Vagina (tissue), 2 donors: ENCODE measurements at regions of chr10 and their contacts with region 1.

Region 1: DNA sequence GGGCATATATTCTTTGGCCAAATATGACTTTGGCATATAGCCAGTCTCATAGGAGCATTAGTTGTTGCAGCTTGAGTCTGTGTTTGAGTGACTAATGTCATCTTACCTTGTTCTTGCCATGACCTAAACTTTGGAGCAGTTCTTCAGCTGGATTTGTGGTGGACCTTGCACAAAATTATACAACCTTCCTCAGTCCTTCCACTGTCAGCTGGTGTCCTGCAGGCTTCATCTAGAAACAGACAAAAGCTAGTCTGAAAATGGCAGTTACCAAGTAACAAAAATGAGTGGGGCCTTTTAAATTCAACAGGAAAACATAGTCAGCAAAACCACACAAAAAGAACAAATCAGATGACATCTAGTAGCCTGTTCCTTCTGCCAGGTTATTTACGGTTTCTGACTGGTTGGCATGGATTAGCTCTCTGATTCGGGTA is 59.5 kb upstream of the HECTD2 start:
- DNase-seq: no peak
- H3K4me3 ChIP-seq: no peak overlapping the region
- H3K27ac ChIP-seq: peak overlapping the region; percentile 43
- H3K4me1 ChIP-seq: peaks cover 16% of the 10 kb centered on the region
- H3K27me3 ChIP-seq: no peaks in the 10 kb centered on the region
- CTCF ChIP-seq: no peak
- POLR2A ChIP-seq: no peak

Region 2: DNA sequence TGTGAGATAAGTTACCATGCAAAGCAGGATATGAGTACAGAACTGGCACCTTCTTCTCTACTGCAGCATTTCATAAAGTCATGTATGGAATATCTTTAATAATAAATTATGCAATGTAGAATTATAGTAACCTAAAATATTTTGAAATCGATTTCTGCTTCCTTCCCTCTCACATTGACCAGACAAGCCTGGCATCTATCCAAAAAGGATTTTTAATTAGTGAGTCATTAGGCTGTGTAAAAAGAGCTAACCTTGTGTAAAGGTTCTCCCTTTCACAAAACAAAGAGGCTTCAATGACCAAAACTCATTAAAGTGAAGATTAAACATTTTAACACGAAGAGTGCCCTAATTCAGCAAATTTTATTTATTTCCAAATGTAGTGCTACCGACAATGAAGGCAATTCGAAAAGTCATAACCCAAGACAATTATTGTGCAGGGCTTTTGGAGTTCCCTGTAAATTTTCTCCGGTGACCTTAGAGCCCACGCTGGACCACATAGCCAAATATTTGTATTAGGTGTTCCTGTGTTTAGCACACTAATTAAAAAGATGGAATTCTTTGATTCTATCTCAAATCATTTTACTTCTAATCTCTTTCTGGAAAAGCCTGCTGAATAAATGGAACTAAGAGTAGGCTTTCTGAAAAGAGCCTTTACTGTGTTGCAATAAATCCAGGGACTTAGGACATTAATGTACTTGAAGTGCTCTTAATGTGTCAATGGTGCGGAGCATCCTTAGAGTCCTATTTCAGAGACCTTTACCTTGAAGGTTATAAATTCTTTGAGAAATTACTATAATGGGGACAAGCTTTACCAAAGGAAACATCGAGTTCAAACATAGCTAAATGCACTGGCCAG is 1449.2 kb after region 1 on chr10:
- intact Hi-C with region 1: loop called (anchors 5 kb)
- DNase-seq: no peak
- H3K4me3 ChIP-seq: no peak overlapping the region
- H3K27ac ChIP-seq: no peak overlapping the region
- H3K4me1 ChIP-seq: no peaks in the 10 kb centered on the region
- H3K27me3 ChIP-seq: no peaks in the 10 kb centered on the region
- CTCF ChIP-seq: no peak
- POLR2A ChIP-seq: no peak

Region 3: DNA sequence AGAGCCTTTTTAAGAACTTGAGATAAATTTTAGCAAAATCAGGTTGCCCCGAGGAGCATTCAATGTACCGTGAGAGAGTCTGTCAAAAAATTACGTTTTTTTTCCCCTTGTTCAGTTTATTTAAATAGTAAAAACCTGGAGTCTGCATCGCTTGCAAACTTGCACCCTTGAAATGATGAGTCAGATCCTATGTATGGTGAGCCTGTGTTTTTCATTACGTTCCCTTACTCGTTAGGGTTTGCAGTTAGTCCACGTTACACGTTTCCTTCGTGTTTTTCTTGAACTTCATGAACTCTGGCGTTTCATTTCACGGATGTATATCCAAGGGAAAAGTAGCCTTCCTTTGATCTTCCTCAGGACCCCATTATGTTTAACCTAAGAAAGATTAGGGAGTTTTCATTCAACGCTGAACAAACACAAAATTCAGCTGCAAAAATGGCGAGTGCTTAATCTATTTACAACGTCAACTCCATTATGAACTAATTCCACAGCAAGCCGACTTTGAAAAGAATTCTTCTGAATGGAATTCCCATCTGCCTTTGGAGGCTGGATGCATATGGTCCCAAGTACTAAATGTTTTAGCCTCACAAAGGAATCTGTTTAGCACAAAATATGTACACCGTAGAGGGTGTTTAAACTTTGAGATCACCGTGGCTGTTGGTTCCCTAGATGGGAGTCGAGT is 1949.1 kb after region 1 on chr10:
- intact Hi-C with region 1: no loop called
- DNase-seq: no peak
- H3K4me3 ChIP-seq: no peak overlapping the region
- H3K27ac ChIP-seq: no peak overlapping the region
- H3K4me1 ChIP-seq: no peaks in the 10 kb centered on the region
- H3K27me3 ChIP-seq: no peaks in the 10 kb centered on the region
- CTCF ChIP-seq: no peak
- POLR2A ChIP-seq: no peak